ENCODE measurements at regions of chr12 and their contacts with region 1.

Region 1: DNA sequence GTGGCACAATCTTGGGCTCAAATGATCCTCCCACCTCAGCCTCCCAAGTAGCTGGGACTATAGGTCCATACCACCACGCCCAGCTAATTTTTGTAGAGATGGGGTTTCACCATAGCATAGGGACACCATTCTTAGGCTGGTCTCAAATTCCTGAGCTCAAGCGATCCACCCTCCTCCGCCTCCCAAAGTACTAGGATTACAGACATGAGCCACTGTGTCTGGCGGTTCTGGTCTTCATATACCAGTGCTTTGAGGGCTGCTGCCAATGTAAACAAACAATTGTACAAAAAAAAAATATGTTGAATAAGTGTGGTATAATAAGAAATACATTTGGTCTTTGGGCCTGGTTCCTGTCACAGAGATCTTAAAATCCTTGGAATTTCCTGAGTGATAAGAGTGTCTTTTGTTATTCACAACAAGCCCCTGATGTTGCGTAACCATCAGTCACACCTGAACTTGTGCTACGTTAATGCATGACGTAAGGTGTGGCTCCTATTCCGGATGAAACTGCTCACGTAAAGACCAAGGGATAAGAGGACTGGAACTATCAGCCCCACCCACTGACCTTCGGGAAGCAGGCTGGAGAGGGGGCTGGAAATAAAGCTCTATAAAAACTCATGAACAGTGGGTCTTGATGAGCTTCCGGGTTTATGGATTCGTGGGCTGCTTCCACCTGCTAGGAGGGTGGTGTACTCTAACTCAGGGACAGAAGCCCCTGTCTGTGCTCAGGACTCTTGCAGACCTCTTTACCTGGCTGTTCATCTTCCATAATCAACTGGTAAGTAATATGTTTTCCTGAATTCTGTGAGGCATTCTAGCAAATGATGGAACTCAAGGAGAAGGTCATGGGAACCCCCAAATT is 16.5 kb upstream of the RIMKLB start:
- DNase-seq: peak; percentile 62
- H3K4me3 ChIP-seq: no peak overlapping the region
- H3K27ac ChIP-seq: peak overlapping the region; percentile 55 to 69
- H3K4me1 ChIP-seq: no peaks in the 10 kb centered on the region
- H3K27me3 ChIP-seq: no peaks in the 10 kb centered on the region
- CTCF ChIP-seq: no peak
- POLR2A ChIP-seq: no peak

Region 2: DNA sequence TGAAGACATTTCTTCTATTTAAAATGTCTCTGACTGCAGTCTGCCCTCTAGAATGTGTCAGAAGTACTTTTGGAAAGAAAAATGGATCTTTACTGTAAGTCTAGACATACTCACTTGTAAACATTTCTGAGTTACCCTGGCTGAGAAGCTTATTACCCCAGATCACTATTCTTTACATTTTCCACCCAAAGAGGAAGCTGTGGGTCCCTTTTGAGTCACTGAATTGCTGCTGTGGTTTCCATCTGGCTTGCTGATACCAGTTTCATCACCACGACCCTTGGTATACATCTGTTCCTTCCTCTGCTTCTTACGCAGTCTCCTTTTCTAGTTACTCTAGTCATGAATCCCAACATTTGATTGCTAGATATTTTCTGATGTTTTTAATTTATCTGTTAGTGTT is 188.2 kb before region 1 on chr12:
- intact Hi-C with region 1: no loop called
- DNase-seq: no peak
- H3K4me3 ChIP-seq: no peak overlapping the region
- H3K27ac ChIP-seq: no peak overlapping the region
- H3K4me1 ChIP-seq: no peaks in the 10 kb centered on the region
- H3K27me3 ChIP-seq: no peaks in the 10 kb centered on the region
- CTCF ChIP-seq: no peak
- POLR2A ChIP-seq: no peak

Region 3: GRCh38 chr12:8823565-8824300 is 142.5 kb after region 1 on chr12:
- intact Hi-C with region 1: loop called (anchors 5 kb)
- DNase-seq: peak; percentile 35
- H3K4me3 ChIP-seq: no peak overlapping the region
- H3K27ac ChIP-seq: peak overlapping the region; percentile 50 to 60
- H3K4me1 ChIP-seq: peaks cover 6% of the 10 kb centered on the region
- H3K27me3 ChIP-seq: no peaks in the 10 kb centered on the region
- CTCF ChIP-seq: peak in 3 of 4 experiments; percentile 24 to 54 (median 45)
- POLR2A ChIP-seq: no peak

Region 4: DNA sequence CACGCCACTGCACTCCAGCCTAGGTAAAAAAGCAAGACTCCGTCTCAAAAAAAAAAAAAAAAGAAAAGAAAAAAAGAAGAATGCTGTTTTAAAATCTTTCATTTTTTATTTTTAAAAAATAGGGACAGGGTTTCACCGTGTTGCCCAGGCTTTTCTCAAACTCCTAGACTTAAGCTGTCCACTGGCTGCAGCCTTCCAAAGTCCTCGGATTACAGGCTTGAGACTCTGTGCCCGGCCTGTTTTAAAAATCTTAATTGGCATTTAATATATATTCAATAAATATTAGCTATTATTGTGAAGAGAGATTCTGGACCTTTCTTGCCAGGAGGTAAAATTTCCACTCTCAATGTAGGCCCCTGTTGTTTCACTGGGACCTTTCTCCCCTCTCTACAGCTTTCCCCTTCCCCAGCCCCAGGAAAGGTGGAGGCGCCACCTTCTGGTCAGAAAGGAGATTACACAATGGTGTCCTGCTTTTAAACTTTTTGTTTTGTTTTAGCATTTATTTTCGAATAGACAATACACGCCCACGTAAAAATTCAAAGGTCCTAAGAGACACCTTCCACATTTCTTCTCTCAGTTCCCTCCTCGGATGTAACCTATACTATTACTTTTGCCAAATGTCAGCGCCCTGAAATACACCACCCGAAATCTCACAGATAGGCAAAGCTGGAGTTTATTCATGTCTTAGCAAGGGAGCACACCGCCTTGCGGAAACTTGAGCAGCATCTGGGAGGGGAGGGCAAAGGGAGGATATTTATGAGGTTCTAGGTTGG is 209.2 kb after region 1 on chr12:
- intact Hi-C with region 1: loop called (anchors 5 kb)
- DNase-seq: peak; percentile 34
- H3K4me3 ChIP-seq: peak overlapping the region; percentile 18 to 32
- H3K27ac ChIP-seq: no peak overlapping the region
- H3K4me1 ChIP-seq: no peaks in the 10 kb centered on the region
- H3K27me3 ChIP-seq: no peaks in the 10 kb centered on the region
- CTCF ChIP-seq: peak; percentile 77 to 90 (median 84)
- POLR2A ChIP-seq: no peak

Region 5: GRCh38 chr12:9039397-9039977 is 358.2 kb after region 1 on chr12:
- intact Hi-C with region 1: loop called (anchors 5 kb)
- DNase-seq: peak; percentile 33
- H3K4me3 ChIP-seq: no peak overlapping the region
- H3K27ac ChIP-seq: no peak overlapping the region
- H3K4me1 ChIP-seq: no peaks in the 10 kb centered on the region
- H3K27me3 ChIP-seq: no peaks in the 10 kb centered on the region
- CTCF ChIP-seq: peak; percentile 48 to 85 (median 74)
- POLR2A ChIP-seq: no peak